ENCODE measurements at regions of chr15 and their contacts with region 1.

Region 1: GRCh38 chr15:84734794-84735479 is 13.5 kb upstream of the ZNF592 start:
- DNase-seq: peak; percentile 75 to 88
- H3K4me3 ChIP-seq: peak overlapping the region; percentile 3 to 42 (median 27); a peak in 4 of 8 replicates
- H3K27ac ChIP-seq: peak overlapping the region; percentile 20; the same call in 1 of the 2 replicates
- H3K4me1 ChIP-seq: peaks cover 5 to 11% (median 8%) of the 10 kb centered on the region in 4 experiments
- H3K27me3 ChIP-seq: no peaks in the 10 kb centered on the region
- CTCF ChIP-seq: no peak
- EP300 ChIP-seq: 0 out of 3 replicates have a peak, but pooled peaks of 1 of the 2 experiments have one; percentile 8
- POLR2A ChIP-seq: no peak
- RAD21 ChIP-seq: no peak

Region 2: GRCh38 chr15:84616235-84616634 is 118.7 kb before region 1 on chr15:
- CTCF ChIA-PET with region 1: no interaction called
- POLR2A ChIA-PET with region 1: no interaction called
- DNase-seq: no peak
- H3K4me3 ChIP-seq: no peak overlapping the region
- H3K27ac ChIP-seq: no peak overlapping the region
- H3K4me1 ChIP-seq: peaks cover 0 to 2% (median 0%) of the 10 kb centered on the region in 4 experiments; a peak in 1 of 7 replicates
- H3K27me3 ChIP-seq: no peaks in the 10 kb centered on the region
- CTCF ChIP-seq: no peak
- EP300 ChIP-seq: no peak
- POLR2A ChIP-seq: no peak
- RAD21 ChIP-seq: no peak

Region 3: GRCh38 chr15:84671211-84671610 is 63.7 kb before region 1 on chr15:
- CTCF ChIA-PET with region 1: no interaction called
- POLR2A ChIA-PET with region 1: no interaction called
- DNase-seq: no peak
- H3K4me3 ChIP-seq: no peak overlapping the region
- H3K27ac ChIP-seq: no peak overlapping the region
- H3K4me1 ChIP-seq: no peaks in the 10 kb centered on the region
- H3K27me3 ChIP-seq: no peaks in the 10 kb centered on the region
- CTCF ChIP-seq: no peak
- EP300 ChIP-seq: no peak
- POLR2A ChIP-seq: no peak
- RAD21 ChIP-seq: no peak

Region 4: GRCh38 chr15:84716036-84716799 is 18.7 kb before region 1 on chr15 and contains the start of gene SEC11A:
- CTCF ChIA-PET with region 1: interaction called, 21 read pairs
- POLR2A ChIA-PET with region 1: interaction called, 43 read pairs
- DNase-seq: peak; percentile 78 to 97
- H3K4me3 ChIP-seq: peak within 1 kb of the TSS; percentile 88 to 95 (median 90)
- H3K27ac ChIP-seq: peak within 1 kb of the TSS; percentile 85
- H3K4me1 ChIP-seq: peaks cover 0 to 8% (median 1%) of the 10 kb centered on the region in 4 experiments; a peak in 3 of 7 replicates
- H3K27me3 ChIP-seq: no peaks in the 10 kb centered on the region
- CTCF ChIP-seq: no peak
- EP300 ChIP-seq: no peak
- POLR2A ChIP-seq: peak; percentile 82 to 96
- RAD21 ChIP-seq: no peak
- total RNA-seq, gene SEC11A: 250 and 268 TPM in 2 replicates

Region 5: DNA sequence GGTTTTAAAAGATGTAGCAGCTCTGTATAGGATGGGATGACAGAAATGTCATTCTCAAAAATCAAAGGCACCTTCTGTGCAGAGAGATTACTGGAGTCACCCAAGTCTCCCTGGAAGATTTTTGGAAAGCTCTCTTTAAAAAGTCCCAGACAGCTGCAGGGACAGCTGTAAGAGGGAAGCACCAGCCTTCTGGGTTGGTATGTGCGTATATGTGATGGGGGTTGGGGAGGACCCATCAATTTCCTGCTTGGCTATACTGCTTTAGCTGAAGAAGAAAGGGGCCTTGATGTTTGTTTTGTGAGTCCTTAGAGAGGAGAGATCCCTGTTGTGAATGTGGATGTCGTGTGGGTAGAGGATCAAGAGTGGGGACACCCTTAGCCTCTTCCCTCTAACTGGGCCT is 13.6 kb before region 1 on chr15:
- CTCF ChIA-PET with region 1: interaction called, 21 read pairs
- POLR2A ChIA-PET with region 1: interaction called, 43 read pairs
- DNase-seq: no peak
- H3K4me3 ChIP-seq: no peak overlapping the region
- H3K27ac ChIP-seq: no peak overlapping the region
- H3K4me1 ChIP-seq: peaks cover 0 to 4% (median 3%) of the 10 kb centered on the region in 4 experiments; a peak in 5 of 7 replicates
- H3K27me3 ChIP-seq: no peaks in the 10 kb centered on the region
- CTCF ChIP-seq: no peak
- EP300 ChIP-seq: no peak
- POLR2A ChIP-seq: no peak
- RAD21 ChIP-seq: no peak

Region 6: GRCh38 chr15:84748274-84749110 is 13.6 kb after region 1 on chr15 and contains the start of gene ZNF592:
- CTCF ChIA-PET with region 1: interaction called, 6 read pairs
- POLR2A ChIA-PET with region 1: interaction called, 30 read pairs
- DNase-seq: peak in 1 of 2 experiments; percentile 82
- H3K4me3 ChIP-seq: peak within 1 kb of the TSS; percentile 66 to 91 (median 81)
- H3K27ac ChIP-seq: peak within 1 kb of the TSS; percentile 87
- H3K4me1 ChIP-seq: peaks cover 3 to 13% (median 11%) of the 10 kb centered on the region in 4 experiments
- H3K27me3 ChIP-seq: no peaks in the 10 kb centered on the region
- CTCF ChIP-seq: peak in 2 of 3 experiments; percentile 13 to 30; a peak in 3 of 4 replicates
- EP300 ChIP-seq: 0 out of 3 replicates have a peak, but pooled peaks of 1 of the 2 experiments have one; percentile 23
- POLR2A ChIP-seq: peak in 1 of 2 experiments; percentile 54; a peak in 2 of 3 replicates
- RAD21 ChIP-seq: peak in 1 of 2 experiments; percentile 16; a peak in 1 of 4 replicates
- total RNA-seq, gene ZNF592: 31.2 and 33.0 TPM in 2 replicates